ENCODE measurements at regions of chr4 and their contacts with region 1.

Region 1: DNA sequence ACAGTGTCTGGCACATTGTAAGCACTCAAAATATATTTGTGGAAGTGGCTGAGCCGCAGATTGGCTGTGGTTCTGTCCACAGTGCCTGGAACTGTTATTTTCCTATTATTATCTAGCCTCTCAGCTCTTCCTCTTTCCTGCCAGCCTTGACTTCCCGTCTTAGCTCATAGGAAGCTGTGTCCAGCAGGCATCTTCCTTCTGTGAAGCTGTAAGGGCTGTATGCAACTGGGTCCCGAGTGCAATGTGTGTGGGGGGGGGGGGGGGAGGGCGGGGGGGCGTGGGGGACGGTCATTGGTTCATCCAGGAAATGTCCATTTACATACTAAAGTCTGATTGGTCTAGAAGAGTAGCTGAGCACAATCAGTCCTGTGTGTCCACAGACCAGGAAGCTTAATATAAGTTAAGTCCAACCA is 210.7 kb downstream of the PDGFRA start:
- ATAC-seq: peak in 3 of 8 experiments; percentile 69 to 84 (median 71)
- H3K4me3 ChIP-seq: no peak overlapping the region
- H3K27ac ChIP-seq: no peak overlapping the region
- H3K4me1 ChIP-seq: no peaks in the 10 kb centered on the region

Region 2: DNA sequence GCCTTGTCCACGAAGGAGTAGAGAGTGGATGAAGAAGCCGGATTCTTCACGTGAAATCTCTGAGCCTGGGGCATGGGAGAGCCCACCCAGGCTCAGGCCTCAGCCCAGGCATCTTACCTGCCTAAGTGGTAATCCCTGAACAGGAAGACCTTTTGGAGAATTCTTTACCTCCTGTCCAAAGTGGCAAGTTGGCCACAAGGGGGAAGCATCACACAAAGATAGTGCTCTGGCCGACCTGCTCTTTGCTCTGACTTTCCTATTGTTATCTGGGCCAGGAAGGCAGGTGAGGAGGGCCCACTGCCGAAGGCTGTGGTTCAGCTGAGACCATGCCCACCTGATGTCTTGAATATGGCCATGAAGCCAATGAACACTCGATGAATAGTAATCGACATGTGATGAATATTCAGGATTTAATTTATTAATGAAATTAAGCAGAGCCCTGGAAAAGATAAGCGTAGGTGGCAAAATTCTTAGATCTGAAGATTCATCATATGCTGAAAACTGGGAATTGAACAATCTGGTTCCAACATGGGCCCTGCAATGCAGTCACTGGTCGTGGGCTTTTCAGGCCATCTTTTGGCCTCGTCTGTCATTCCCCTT is 116.9 kb before region 1 on chr4:
- in situ Hi-C with region 1: loop called in 1 of 9 experiments (anchors 10 kb)
- ATAC-seq: peak; percentile 76 to 95 (median 86)
- H3K4me3 ChIP-seq: no peak overlapping the region
- H3K27ac ChIP-seq: no peak overlapping the region
- H3K4me1 ChIP-seq: peaks cover 0 to 6% of the 10 kb centered on the region in 2 donors

Region 3: GRCh38 chr4:54384563-54384962 is 55.3 kb before region 1 on chr4:
- in situ Hi-C with region 1: loop called in 1 of 9 experiments (anchors 10 kb)
- ATAC-seq: peak in 3 of 8 experiments; percentile 42 to 79 (median 62)
- H3K4me3 ChIP-seq: no peak overlapping the region
- H3K27ac ChIP-seq: no peak overlapping the region
- H3K4me1 ChIP-seq: no peaks in the 10 kb centered on the region

Measured in motor neuron (in vitro differentiated cells).